Activated CD8-positive, alpha-beta T cell treated with anti-CD3 and anti-CD28 coated beads for 36 hours (primary cell): ENCODE measurements at regions of chr2 and their contacts with region 1.

Region 1: GRCh38 chr2:64914735-64915509 is 74.3 kb upstream of the SLC1A4 start:
- DNase-seq: no peak
- ATAC-seq: no peak
- H3K4me3 Mint-ChIP-seq: no peak overlapping the region
- H3K27ac Mint-ChIP-seq: no peak overlapping the region
- H3K4me1 Mint-ChIP-seq: peaks cover 28% of the 10 kb centered on the region
- H3K27me3 Mint-ChIP-seq: no peaks in the 10 kb centered on the region
- CTCF ChIP-seq: no peak

Region 2: DNA sequence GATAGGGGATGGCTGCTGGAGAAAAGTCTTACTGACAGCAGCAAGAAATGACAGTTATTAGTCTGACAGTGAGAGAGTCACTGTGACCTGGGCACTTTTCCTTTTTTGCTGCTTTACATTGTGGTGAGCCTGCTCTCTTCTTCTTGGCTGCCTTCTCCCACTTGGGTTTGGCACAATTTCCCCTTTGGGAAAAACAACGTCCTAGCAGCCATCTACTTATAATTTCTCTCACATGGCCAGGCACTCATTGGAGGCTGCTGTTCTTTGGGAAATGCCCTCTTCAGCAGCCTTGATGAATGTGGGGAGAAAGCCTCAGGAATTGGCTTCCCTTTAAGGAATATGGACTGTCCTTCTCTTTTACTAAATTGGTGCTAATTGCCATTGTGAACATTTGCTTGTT is 13.9 kb after region 1 on chr2:
- CTCF ChIA-PET with region 1: interaction called, 13 read pairs
- POLR2A ChIA-PET with region 1: interaction called, 4 read pairs
- intact Hi-C with region 1: no loop called
- DNase-seq: no peak
- ATAC-seq: no peak
- H3K4me3 Mint-ChIP-seq: no peak overlapping the region
- H3K27ac Mint-ChIP-seq: no peak overlapping the region
- H3K4me1 Mint-ChIP-seq: no peaks in the 10 kb centered on the region
- H3K27me3 Mint-ChIP-seq: peaks cover 4% of the 10 kb centered on the region
- CTCF ChIP-seq: no peak

Region 3: GRCh38 chr2:64988420-64989125 is 73.7 kb after region 1 on chr2:
- CTCF ChIA-PET with region 1: interaction called, 12 read pairs
- POLR2A ChIA-PET with region 1: interaction called, 4 read pairs
- intact Hi-C with region 1: loop called (anchors 5 kb)
- DNase-seq: peak; percentile 80
- ATAC-seq: peak; percentile 39
- H3K4me3 Mint-ChIP-seq: peak overlapping the region; percentile 73
- H3K27ac Mint-ChIP-seq: peak overlapping the region; percentile 73
- H3K4me1 Mint-ChIP-seq: peaks cover 48% of the 10 kb centered on the region
- H3K27me3 Mint-ChIP-seq: peaks cover 10% of the 10 kb centered on the region
- CTCF ChIP-seq: peak; percentile 48

Region 4: GRCh38 chr2:65031341-65032018 is 116.6 kb after region 1 on chr2:
- CTCF ChIA-PET with region 1: interaction called, 237 read pairs
- POLR2A ChIA-PET with region 1: no interaction called
- intact Hi-C with region 1: loop called (anchors 2 kb)
- DNase-seq: no peak
- ATAC-seq: peak; percentile 31
- H3K4me3 Mint-ChIP-seq: no peak overlapping the region
- H3K27ac Mint-ChIP-seq: no peak overlapping the region
- H3K4me1 Mint-ChIP-seq: peaks cover 23% of the 10 kb centered on the region
- H3K27me3 Mint-ChIP-seq: no peaks in the 10 kb centered on the region
- CTCF ChIP-seq: no peak

Region 5: DNA sequence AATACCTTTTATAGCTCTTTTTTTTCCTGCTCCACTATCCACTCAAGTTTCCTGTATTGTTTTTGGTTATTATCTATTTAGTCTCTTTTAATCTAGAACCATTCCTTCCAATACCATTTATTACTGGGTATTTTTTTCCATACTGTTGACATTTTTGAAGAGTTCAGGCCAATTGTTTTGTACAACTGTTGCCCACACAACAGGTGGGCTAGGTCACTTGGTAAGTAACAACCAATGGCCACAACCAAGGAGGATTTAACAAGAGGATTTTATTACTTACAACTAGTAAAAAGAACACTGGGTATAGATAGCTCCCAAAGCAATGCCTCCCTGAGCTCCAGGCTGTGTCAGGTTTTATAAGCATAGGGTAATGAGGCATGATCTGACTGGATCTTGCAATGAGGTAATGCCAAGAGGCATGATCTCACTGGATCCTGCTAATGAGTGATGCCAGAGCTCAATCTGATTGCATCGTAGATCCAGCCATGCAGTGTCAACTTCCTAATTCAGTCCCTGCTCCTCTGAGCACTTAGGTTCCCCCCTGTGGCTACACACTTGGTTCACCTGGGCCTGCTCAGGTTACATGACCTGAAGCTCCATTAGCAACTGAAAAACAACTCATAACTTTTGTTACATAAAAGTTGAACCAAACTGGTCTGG is 134.2 kb after region 1 on chr2:
- CTCF ChIA-PET with region 1: interaction called, 237 read pairs
- POLR2A ChIA-PET with region 1: interaction called, 3 read pairs
- intact Hi-C with region 1: no loop called
- DNase-seq: peak; percentile 36
- ATAC-seq: peak; percentile 37
- H3K4me3 Mint-ChIP-seq: no peak overlapping the region
- H3K27ac Mint-ChIP-seq: no peak overlapping the region
- H3K4me1 Mint-ChIP-seq: peaks cover 20% of the 10 kb centered on the region
- H3K27me3 Mint-ChIP-seq: no peaks in the 10 kb centered on the region
- CTCF ChIP-seq: no peak